ENCODE measurements at regions of chr10 and their contacts with region 1.

Region 1: GRCh38 chr10:95246579-95247051 is 44.2 kb downstream of the PDLIM1 start:
- DNase-seq: peak; percentile 82 to 90 (median 83)
- H3K4me3 ChIP-seq: no peak overlapping the region
- H3K27ac ChIP-seq: no peak overlapping the region
- H3K4me1 ChIP-seq: peaks cover 0 to 22% (median 12%) of the 10 kb centered on the region in 4 experiments
- H3K27me3 ChIP-seq: no peaks in the 10 kb centered on the region

Region 2: DNA sequence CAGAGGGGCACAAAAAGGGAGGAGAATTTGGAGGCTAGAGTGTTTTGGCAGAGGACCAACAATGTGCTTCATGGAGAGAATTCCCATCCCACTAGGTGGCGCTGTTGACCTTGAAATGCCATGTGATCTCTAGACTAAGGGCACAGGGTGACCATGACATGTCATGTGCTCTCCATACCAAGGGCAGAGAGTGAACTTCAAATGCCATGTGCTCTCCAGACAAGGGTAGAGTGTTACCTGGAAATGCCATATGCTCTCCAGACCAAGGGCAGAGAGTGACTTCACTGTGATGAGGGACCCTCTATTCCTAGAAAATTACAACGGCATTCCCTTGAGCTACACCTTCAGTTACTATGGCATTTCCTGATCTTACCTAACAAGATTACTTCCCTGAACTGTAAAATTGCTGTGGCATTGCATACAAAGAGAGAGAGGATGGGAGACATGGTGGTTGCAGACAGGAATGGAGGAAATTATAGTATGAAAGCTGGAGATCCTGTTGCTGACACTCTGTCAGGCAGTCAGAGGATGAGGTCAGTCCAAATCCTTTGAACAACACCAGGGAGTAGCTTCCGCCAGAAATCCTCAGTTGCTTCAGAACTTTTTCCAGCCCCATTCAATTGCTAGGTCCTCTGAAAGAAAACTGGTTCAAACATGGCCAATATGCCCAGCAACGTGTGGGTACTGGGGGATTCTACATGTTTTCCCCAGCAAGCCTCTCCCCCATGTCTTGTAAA is 113.4 kb before region 1 on chr10:
- CTCF ChIA-PET with region 1: interaction called, 35 read pairs
- POLR2A ChIA-PET with region 1: no interaction called
- DNase-seq: peak; percentile 76 to 88 (median 84)
- H3K4me3 ChIP-seq: no peak overlapping the region
- H3K27ac ChIP-seq: no peak overlapping the region
- H3K4me1 ChIP-seq: no peaks in the 10 kb centered on the region
- H3K27me3 ChIP-seq: no peaks in the 10 kb centered on the region

Region 3: GRCh38 chr10:95201736-95202135 is 44.9 kb before region 1 on chr10:
- CTCF ChIA-PET with region 1: interaction called, 10 read pairs
- POLR2A ChIA-PET with region 1: no interaction called
- DNase-seq: no peak
- H3K4me3 ChIP-seq: no peak overlapping the region
- H3K27ac ChIP-seq: no peak overlapping the region
- H3K4me1 ChIP-seq: no peaks in the 10 kb centered on the region
- H3K27me3 ChIP-seq: no peaks in the 10 kb centered on the region

Region 4: GRCh38 chr10:95236068-95236903 is 10.3 kb before region 1 on chr10:
- CTCF ChIA-PET with region 1: interaction called, 12 read pairs
- POLR2A ChIA-PET with region 1: no interaction called
- DNase-seq: peak in 1 of 3 donors; percentile 25
- H3K4me3 ChIP-seq: no peak overlapping the region
- H3K27ac ChIP-seq: no peak overlapping the region
- H3K4me1 ChIP-seq: peaks cover 0 to 2% (median 0%) of the 10 kb centered on the region in 4 experiments
- H3K27me3 ChIP-seq: no peaks in the 10 kb centered on the region

Region 5: GRCh38 chr10:95343573-95343972 is 97.0 kb after region 1 on chr10:
- CTCF ChIA-PET with region 1: interaction called, 22 read pairs
- POLR2A ChIA-PET with region 1: no interaction called
- DNase-seq: no peak
- H3K4me3 ChIP-seq: no peak overlapping the region
- H3K27ac ChIP-seq: no peak overlapping the region
- H3K4me1 ChIP-seq: no peaks in the 10 kb centered on the region
- H3K27me3 ChIP-seq: no peaks in the 10 kb centered on the region

Region 6: DNA sequence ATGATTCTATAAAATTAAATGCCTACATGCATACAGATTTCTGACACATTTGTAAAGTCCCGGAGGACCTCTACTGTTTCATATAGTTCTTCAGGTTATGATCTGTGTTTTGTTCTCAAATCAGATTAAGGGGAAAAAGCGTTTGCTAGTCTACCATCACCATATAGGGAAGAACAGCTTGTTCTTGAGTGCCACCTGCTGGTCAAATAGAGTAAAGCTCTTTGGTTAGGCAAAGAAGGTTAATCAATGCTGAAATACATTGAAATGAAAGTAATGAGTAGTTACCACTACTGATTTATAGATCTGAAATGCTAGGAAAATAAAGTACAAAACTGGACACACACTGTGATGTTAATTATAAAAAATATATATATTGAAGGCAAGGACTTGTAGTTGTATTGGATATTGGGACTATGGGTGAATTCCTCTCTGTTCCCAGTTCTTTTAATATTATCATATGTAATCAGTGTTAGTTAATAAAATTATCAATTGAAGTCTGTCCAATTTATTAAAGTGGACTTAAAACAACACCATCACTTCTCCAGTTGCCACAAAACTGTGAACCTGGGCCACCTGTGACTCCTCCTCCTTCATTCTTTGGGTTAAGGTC is 116.8 kb after region 1 on chr10:
- CTCF ChIA-PET with region 1: interaction called, 399 read pairs
- POLR2A ChIA-PET with region 1: interaction called, 6 read pairs
- DNase-seq: peak; percentile 60 to 83 (median 76)
- H3K4me3 ChIP-seq: no peak overlapping the region
- H3K27ac ChIP-seq: no peak overlapping the region
- H3K4me1 ChIP-seq: no peaks in the 10 kb centered on the region
- H3K27me3 ChIP-seq: no peaks in the 10 kb centered on the region